ENCODE measurements at regions of chr2 and their contacts with region 1.

Region 1: DNA sequence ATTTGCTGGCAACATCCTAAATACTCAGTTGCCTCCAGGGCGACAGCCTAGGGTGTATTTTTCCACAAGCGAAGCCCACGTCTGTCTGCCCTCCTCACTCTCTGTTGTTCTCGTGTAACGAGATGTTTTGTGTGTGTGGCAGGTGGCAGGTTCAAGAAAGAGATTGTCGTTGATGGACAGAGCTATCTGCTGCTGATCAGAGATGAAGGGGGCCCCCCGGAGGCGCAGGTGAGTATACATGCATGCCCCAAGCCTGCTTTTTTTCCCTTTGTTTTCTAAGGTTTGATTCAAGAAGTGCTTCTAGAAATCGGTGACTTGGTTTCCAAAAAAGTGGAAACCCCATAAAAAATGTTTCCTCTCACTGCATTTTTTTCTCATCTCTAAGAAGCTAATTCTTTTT is 247.0 kb downstream of the AGAP1 start:
- DNase-seq: peak in 1 of 2 experiments; percentile 65
- H3K4me3 ChIP-seq: no peak overlapping the region
- H3K27ac ChIP-seq: no peak overlapping the region
- H3K4me1 ChIP-seq: no peaks in the 10 kb centered on the region; a peak in 1 of 7 replicates
- H3K27me3 ChIP-seq: no peaks in the 10 kb centered on the region
- CTCF ChIP-seq: peak; percentile 41 to 63 (median 56)
- EP300 ChIP-seq: no peak
- POLR2A ChIP-seq: no peak
- RAD21 ChIP-seq: peak; percentile 63 to 74

Region 2: DNA sequence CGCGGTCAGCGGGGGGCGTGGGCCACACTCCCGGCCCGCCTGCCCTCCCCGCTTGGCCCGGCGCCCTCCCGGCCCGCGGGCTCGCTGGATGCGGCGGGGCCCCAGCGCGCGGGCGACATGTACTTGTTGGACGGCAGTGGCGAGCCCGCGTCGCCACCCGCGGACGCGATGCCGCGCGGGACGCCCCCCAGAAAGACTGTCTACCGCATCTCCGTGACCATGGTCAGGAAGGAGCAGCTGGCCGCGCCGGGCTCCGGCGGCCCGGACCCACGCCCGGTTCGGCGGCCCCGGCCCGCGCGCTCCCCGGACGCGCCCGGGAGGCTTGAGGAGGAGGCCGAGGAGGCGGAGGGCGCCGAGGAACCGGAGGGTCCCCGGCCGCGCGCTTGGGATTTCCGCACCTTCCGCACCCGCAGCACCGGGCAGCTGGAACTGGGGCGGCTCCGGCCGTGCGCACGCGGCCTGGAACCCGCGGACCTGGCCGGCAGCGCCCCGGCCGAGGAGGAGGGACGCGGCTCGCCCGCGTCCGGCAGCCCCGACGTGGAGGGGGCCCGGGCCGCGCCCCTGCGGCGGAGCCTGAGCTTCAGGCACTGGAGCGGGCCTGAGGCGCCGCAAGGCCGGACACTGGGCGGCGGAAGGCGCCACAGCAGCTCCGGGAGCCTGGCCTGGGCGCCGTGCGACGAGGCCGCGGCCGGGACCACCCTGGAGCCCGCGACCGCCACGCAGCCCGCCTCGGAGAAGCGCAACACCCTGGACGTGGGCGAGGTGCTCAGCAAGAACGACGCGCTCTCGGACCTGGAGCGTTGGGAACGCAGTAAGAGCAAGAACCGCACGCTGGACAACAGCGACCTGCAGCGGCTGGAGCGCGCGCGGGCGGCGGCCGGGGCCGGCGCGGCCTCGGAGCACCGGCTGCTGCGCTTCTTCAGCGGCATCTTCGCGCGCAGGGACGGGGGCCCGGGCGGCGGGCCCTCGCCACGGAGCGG is 70.5 kb before region 1 on chr2:
- CTCF ChIA-PET with region 1: interaction called, 12 read pairs
- POLR2A ChIA-PET with region 1: no interaction called
- DNase-seq: peak in 1 of 2 experiments; percentile 78
- H3K4me3 ChIP-seq: peak overlapping the region; percentile 44 to 64 (median 56)
- H3K27ac ChIP-seq: no peak overlapping the region
- H3K4me1 ChIP-seq: peaks cover 7 to 33% (median 26%) of the 10 kb centered on the region in 4 experiments
- H3K27me3 ChIP-seq: peaks cover 0 to 7% (median 3%) of the 10 kb centered on the region in 4 experiments; a peak in 4 of 7 replicates
- CTCF ChIP-seq: peak; percentile 58 to 78 (median 67)
- EP300 ChIP-seq: no peak
- POLR2A ChIP-seq: no peak
- RAD21 ChIP-seq: peak; percentile 65 to 84

Region 3: GRCh38 chr2:235727174-235727573 is 13.6 kb before region 1 on chr2:
- CTCF ChIA-PET with region 1: interaction called, 15 read pairs
- POLR2A ChIA-PET with region 1: no interaction called
- DNase-seq: no peak
- H3K4me3 ChIP-seq: no peak overlapping the region
- H3K27ac ChIP-seq: no peak overlapping the region
- H3K4me1 ChIP-seq: peaks cover 0 to 2% (median under 1%) of the 10 kb centered on the region in 4 experiments; a peak in 3 of 7 replicates
- H3K27me3 ChIP-seq: no peaks in the 10 kb centered on the region
- CTCF ChIP-seq: no peak
- EP300 ChIP-seq: no peak
- POLR2A ChIP-seq: no peak
- RAD21 ChIP-seq: no peak

Region 4: GRCh38 chr2:235854276-235854675 is 113.5 kb after region 1 on chr2:
- CTCF ChIA-PET with region 1: no interaction called
- POLR2A ChIA-PET with region 1: no interaction called
- DNase-seq: no peak
- H3K4me3 ChIP-seq: no peak overlapping the region
- H3K27ac ChIP-seq: no peak overlapping the region
- H3K4me1 ChIP-seq: peaks cover 0 to 8% (median 0%) of the 10 kb centered on the region in 4 experiments; a peak in 4 of 7 replicates
- H3K27me3 ChIP-seq: no peaks in the 10 kb centered on the region
- CTCF ChIP-seq: no peak
- EP300 ChIP-seq: no peak
- POLR2A ChIP-seq: no peak
- RAD21 ChIP-seq: no peak

Measured in H1 (cell line).